GM10248 (cell line): ENCODE measurements at regions of chr3 and their contacts with region 1.

Region 1: GRCh38 chr3:15703346-15703745 is 94.4 kb downstream of the ANKRD28 start:
- DNase-seq: no peak
- CTCF ChIP-seq: no peak

Region 2: GRCh38 chr3:15713364-15713763 is 10.0 kb after region 1 on chr3:
- CTCF ChIA-PET with region 1: interaction called, 10 read pairs
- POLR2A ChIA-PET with region 1: no interaction called
- DNase-seq: no peak
- CTCF ChIP-seq: no peak

Region 3: GRCh38 chr3:15731024-15731423 is 27.7 kb after region 1 on chr3:
- CTCF ChIA-PET with region 1: no interaction called
- POLR2A ChIA-PET with region 1: no interaction called
- DNase-seq: no peak
- CTCF ChIP-seq: no peak

Region 4: GRCh38 chr3:15982667-15983145 is 279.4 kb after region 1 on chr3:
- CTCF ChIA-PET with region 1: no interaction called
- POLR2A ChIA-PET with region 1: no interaction called
- DNase-seq: no peak
- CTCF ChIP-seq: no peak